Motor neuron (in vitro differentiated cells): ENCODE measurements at regions of chr11 and their contacts with region 1.

Region 1: DNA sequence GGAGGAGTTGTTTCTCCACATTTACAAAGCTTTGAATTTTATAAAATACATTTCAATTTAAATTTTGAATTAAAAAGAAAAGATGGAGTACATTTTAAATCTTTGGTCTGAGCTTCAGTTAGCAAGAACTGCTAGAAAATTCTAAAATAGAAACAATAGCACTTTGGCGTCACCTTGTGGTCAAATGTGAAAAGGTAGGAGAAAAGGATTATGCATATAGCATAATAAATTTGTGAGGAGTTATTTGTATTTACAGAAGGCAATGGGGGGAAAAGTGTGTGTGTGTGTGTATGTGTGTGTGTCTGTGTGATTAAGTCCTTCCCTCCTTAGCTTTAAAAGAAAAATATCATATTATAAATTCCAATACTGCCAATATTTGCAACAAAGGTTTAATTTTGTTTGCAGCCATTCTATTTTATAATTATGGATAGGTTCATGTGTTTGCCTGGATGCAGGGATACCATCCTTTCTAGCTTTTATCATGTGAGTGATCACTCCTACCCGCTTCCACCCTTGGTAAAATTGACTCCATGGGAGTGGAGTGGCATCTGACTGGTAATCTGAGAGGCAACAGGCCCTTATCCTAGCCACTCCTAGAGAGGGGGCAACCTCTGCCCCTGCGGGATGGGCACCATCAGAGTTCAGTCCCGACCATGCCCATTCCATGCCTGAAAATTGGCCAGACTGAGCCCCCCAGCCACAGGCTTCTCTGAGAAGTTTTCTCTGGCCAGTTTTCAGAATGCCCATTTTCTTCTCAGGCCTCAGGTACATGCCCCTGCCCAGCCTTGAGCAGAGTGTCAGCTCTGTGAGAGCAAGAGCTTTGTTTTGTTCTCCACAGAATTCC is 13.6 kb upstream of the LGR4 start:
- ATAC-seq: peak in 6 of 8 experiments; percentile 28 to 84 (median 52)
- H3K4me3 ChIP-seq: no peak overlapping the region
- H3K27ac ChIP-seq: no peak overlapping the region
- H3K4me1 ChIP-seq: no peaks in the 10 kb centered on the region

Region 2: DNA sequence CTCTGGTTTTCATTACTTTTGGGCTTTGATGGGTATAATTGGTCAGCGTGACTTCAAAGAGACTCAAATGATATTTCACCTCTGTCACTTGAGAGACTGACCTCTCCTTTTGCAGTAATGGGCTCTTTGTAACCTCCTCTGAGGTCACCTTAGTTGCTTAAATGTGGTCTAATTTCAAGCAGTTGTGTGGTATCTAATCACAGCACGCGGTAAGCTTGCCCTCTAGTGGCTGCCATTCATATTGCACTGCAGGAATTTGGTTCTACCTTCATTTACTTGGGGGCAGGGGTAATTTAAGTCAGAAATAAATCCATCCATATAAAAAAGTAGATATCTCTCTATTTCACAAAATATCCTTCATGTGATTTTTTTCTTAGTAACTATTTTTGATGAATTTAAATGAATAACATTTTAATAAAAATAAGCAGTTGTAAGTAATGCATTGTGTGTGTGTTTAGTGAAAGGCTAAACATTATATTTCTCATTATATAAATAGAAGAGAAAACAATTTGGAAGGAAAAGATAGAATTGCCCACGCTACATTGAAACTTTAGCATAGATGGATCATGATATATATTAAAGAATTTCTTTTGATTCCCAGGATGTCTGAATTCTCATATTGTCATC is 1209.2 kb before region 1 on chr11:
- in situ Hi-C with region 1: loop called in 4 of 9 experiments (anchors 25 kb)
- ATAC-seq: peak; percentile 63 to 81 (median 71)
- H3K4me3 ChIP-seq: no peak overlapping the region
- H3K27ac ChIP-seq: no peak overlapping the region
- H3K4me1 ChIP-seq: no peaks in the 10 kb centered on the region

Region 3: GRCh38 chr11:26319906-26320305 is 1166.2 kb before region 1 on chr11:
- in situ Hi-C with region 1: loop called in 1 of 9 experiments (anchors 25 kb)
- ATAC-seq: peak in 7 of 8 experiments; percentile 61 to 95 (median 80)
- H3K4me3 ChIP-seq: no peak overlapping the region
- H3K27ac ChIP-seq: peak overlapping the region in 1 of 2 donors; percentile 6
- H3K4me1 ChIP-seq: peaks cover 6% of the 10 kb centered on the region in 2 donors

Region 4: DNA sequence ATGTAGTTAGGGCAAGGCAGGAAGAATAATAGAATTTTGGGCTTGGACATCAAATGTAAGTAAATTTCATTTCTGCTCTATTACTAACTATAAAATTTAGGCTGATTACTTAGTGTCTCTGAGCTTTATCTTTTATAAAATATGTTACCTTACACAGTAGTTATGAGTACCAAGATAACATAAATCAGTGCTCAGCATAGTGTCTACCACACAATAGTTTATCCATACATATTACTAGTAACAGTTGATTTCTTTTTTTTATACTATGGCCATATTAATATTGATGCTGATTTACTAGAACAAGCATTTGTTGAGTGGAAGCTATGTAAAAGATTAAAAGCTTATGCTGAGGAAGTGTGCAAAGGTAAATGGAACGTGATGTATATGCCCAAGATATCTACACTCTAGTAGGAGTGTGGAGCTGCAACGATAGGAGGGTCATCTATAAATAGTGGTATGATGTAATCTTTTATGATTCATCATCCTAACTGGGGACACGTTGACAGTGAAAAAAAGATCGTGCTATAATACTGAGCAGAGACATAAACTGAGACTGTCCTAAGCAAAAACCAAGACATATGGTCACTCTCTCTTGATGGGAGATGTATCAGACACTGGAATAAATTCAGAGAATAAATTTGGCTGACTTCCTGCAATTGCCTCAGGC is 755.6 kb before region 1 on chr11:
- in situ Hi-C with region 1: loop called in 1 of 9 experiments (anchors 25 kb)
- ATAC-seq: peak in 7 of 8 experiments; percentile 85 to 100 (median 99)
- H3K4me3 ChIP-seq: no peak overlapping the region
- H3K27ac ChIP-seq: peak overlapping the region; percentile 68
- H3K4me1 ChIP-seq: peaks cover 6 to 8% of the 10 kb centered on the region in 2 donors

Region 5: GRCh38 chr11:26753723-26754504 is 732.2 kb before region 1 on chr11:
- in situ Hi-C with region 1: loop called in 3 of 9 experiments (anchors 25 kb)
- ATAC-seq: peak; percentile 89 to 99 (median 95)
- H3K4me3 ChIP-seq: no peak overlapping the region
- H3K27ac ChIP-seq: no peak overlapping the region
- H3K4me1 ChIP-seq: peaks cover 9 to 23% of the 10 kb centered on the region in 2 donors

Region 6: GRCh38 chr11:27183672-27184457 is 302.3 kb before region 1 on chr11:
- in situ Hi-C with region 1: loop called in 4 of 9 experiments (anchors 10 to 25 kb)
- ATAC-seq: peak in 4 of 8 experiments; percentile 13 to 64 (median 31)
- H3K4me3 ChIP-seq: no peak overlapping the region
- H3K27ac ChIP-seq: no peak overlapping the region
- H3K4me1 ChIP-seq: no peaks in the 10 kb centered on the region